GM23248 (cell line): ENCODE measurements at regions of chr16 and their contacts with region 1.

Region 1: GRCh38 chr16:8963825-8964441 is at the start of gene USP7:
- DNase-seq: peak; percentile 98
- H3K4me3 ChIP-seq: peak within 1 kb of the TSS; percentile 95
- H3K27ac ChIP-seq: peak within 1 kb of the TSS; percentile 38
- H3K4me1 ChIP-seq: peaks cover 32% of the 10 kb centered on the region
- H3K27me3 ChIP-seq: no peaks in the 10 kb centered on the region
- total RNA-seq, gene USP7: 28.3 and 30.6 TPM in 2 replicates

Region 2: GRCh38 chr16:8776129-8776584 is 187.8 kb before region 1 on chr16:
- in situ Hi-C with region 1: no loop called
- DNase-seq: no peak
- H3K4me3 ChIP-seq: no peak overlapping the region
- H3K27ac ChIP-seq: no peak overlapping the region
- H3K4me1 ChIP-seq: no peaks in the 10 kb centered on the region
- H3K27me3 ChIP-seq: no peaks in the 10 kb centered on the region

Region 3: GRCh38 chr16:8905168-8905762 is 58.7 kb before region 1 on chr16:
- in situ Hi-C with region 1: no loop called
- DNase-seq: peak; percentile 56
- H3K4me3 ChIP-seq: no peak overlapping the region
- H3K27ac ChIP-seq: no peak overlapping the region
- H3K4me1 ChIP-seq: peaks cover 6% of the 10 kb centered on the region; the same call in 1 of the 2 replicates
- H3K27me3 ChIP-seq: no peaks in the 10 kb centered on the region

Region 4: DNA sequence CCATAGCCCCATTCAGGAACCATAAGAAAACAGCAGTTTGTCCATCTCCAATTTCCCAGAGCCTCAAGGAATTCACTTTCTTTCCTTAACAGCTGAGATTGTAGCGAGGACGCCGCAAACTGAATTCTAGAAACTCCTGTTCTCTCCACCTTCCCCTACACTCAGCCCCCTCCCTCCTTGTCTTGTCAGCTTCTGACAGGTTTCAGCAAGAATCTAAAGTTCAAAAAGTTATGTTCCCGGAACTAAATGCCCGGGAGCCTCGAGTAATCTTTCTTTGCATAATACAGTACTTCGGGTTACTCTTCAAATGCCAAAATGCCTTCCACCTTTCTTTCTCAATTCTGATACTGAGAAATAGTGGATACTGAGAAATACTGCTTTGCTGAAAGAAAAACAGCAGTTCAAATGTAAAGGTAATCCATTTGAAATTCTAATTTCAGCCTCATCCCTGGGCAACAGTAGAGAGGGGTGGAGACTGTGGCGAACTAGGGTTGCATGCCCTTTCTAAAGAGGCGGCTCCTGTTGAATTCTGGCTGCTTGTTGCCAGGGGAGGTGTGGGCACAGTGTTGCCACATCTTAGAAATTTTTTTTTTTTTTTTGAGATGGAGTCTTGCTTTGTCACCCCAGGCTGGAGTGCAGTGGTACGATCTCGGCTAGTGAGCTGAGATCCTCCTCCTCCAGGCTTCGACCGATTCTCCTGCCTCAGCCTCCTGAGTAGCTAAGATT is 63.3 kb after region 1 on chr16:
- in situ Hi-C with region 1: loop called (anchors 10 kb)
- DNase-seq: no peak
- H3K4me3 ChIP-seq: no peak overlapping the region
- H3K27ac ChIP-seq: no peak overlapping the region
- H3K4me1 ChIP-seq: no peaks in the 10 kb centered on the region
- H3K27me3 ChIP-seq: no peaks in the 10 kb centered on the region